Activated CD8-positive, alpha-beta memory T cell treated with anti-CD3 and anti-CD28 coated beads, Interleukin-2, amount 10 ng/mL, durations not matched to agents 7 days and 5 days (primary cell): ENCODE measurements at regions of chr6 and their contacts with region 1.

Region 1: GRCh38 chr6:170087941-170088581 is 202.8 kb downstream of the DLL1 start:
- DNase-seq: peak; percentile 90
- ATAC-seq: peak; percentile 72
- H3K4me3 Mint-ChIP-seq: peak overlapping the region; percentile 79
- H3K27ac Mint-ChIP-seq: peak overlapping the region; percentile 97
- H3K4me1 Mint-ChIP-seq: peaks cover 41% of the 10 kb centered on the region
- H3K27me3 Mint-ChIP-seq: no peaks in the 10 kb centered on the region

Region 2: GRCh38 chr6:170110201-170111140 is 22.4 kb after region 1 on chr6:
- CTCF ChIA-PET with region 1: no interaction called
- DNase-seq: peak; percentile 31
- ATAC-seq: no peak
- H3K4me3 Mint-ChIP-seq: no peak overlapping the region
- H3K27ac Mint-ChIP-seq: no peak overlapping the region
- H3K4me1 Mint-ChIP-seq: no peaks in the 10 kb centered on the region
- H3K27me3 Mint-ChIP-seq: peaks cover 12% of the 10 kb centered on the region

Region 3: DNA sequence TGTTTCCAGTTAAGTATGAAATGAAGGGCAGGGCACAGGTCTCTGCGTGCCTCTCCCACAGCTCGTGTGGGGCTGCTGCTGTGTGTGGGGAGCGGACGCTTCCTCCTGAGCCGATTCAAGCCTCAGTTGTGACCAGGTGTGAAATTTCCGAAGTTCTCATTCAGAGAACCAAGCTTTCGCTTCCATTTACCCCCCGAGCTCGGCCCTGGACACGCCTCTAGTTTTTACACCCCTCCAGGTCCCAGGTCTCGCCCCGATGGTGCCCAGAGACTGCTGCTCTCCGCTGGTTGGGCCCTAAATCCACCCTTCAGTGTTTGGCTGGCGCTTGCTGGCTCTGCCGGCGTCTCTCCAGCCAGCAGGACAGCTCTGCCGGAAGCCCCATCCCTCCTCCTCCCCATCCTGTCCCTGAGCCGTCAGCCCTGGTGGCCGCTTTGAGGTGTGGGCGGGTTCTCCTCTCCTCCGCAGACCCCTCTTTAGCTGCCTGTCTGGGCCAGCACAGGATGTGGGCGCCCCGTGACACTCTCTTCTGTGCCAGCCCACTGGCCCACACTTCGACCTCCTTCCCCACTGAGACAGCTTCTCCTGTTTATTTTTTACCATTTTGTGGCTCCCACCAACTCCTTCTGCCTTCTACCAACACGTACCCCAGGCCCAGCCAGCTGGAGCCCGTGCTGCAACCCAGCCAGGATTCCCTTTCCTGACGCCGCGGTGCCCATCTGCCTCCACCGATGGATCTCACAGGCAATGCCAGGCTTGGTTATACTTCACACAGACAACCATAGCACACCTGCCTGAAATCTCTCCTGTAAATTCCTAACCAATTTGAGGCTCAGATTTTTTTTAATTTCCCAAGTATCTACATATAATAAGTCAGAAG is 60.0 kb after region 1 on chr6:
- CTCF ChIA-PET with region 1: interaction called, 10 read pairs
- DNase-seq: peak; percentile 92
- ATAC-seq: peak; percentile 84
- H3K4me3 Mint-ChIP-seq: peak overlapping the region; percentile 74
- H3K27ac Mint-ChIP-seq: peak overlapping the region; percentile 96
- H3K4me1 Mint-ChIP-seq: peaks cover 52% of the 10 kb centered on the region
- H3K27me3 Mint-ChIP-seq: peaks cover 40% of the 10 kb centered on the region

Region 4: DNA sequence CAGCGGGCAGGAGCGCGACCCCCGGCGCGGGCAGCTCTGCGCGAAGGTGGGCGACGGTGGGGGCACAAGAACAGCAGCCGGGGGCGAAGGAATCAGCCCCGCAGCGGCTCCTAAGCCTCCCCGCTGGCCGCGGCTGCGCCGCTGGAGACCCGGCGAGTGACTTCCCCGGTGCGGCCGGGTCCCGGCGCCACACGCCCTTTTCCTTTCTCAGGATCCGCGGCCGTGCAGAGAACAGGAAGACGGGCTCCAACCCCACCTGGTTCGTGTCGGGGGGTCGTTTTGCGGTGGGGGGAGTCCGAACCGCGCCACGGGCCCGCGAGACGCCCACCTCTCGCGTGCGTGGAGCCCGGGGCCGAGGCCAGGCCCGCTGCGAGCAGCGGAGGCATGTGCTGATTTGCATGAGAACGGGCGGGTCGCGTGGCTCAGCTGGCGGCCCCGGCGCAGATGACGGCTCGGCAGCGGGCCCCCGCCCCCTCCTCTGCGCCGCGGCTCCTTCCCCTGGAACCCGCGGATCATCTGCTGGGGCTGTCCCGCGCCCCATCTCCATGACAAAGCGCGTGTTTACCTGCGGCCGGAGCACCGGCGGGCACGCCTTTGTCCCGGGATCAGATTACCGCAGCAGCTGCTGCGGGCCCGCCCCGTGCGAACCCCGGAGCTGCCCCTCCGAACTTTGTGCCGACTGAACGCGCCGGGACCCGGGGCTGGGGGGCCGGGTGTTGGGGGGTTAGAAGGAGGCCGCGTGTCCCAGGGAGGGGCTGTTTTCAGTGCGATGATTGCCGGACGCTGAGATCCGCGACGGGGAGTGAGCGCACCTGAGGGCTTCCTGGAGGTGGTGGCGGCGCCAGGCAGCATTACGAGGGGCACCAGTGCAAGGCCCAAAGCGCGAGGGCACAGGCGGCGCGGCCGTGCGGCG is 207.7 kb after region 1 on chr6:
- CTCF ChIA-PET with region 1: no interaction called
- DNase-seq: no peak
- ATAC-seq: peak; percentile 30
- H3K4me3 Mint-ChIP-seq: peak overlapping the region; percentile 51
- H3K27ac Mint-ChIP-seq: no peak overlapping the region
- H3K4me1 Mint-ChIP-seq: peaks cover 29% of the 10 kb centered on the region
- H3K27me3 Mint-ChIP-seq: peaks cover 80% of the 10 kb centered on the region